AG04450 (cell line): ENCODE measurements at regions of chr1 and their contacts with region 1.

Region 1: DNA sequence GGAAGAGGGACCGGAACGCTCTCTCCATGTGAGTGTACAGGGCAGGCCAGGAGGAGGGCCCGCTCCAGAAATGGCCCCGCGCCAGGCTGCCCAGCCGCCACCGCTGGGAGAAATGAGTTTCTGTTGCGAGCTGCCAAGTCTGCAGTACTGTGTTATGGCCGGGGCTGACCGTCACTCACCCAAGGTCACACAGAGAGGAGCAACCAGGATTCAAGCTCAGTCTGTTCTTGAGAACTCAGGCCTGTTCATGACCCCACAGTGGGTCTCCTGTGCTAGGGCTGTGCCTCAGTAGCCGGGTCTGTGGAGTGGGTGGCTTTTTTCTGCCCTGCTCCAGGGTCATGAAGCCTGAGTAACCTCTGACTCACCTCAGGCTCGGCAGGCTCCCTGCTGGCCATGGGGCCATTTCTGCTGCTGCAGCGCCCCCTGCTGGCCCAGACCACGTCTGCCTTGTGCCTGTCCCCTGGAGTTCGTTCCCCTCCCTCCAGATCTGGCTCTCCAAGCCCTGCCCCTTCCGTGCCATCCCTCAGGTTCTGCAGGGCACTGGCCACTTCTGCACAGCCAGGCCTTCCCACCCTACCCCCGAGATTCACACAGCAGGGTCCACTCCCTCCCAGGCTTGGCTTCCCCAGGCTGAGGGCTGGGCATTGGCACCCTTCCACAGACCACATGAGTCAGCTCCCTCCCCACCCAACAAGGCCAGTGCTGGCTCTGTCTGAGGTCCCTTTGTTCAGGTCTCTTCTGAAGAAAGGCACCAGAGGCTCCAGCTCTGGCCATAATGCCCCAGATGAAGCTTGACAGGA is 51.8 kb downstream of the EDN2 start:
- DNase-seq: peak; percentile 34
- H3K4me3 ChIP-seq: no peak overlapping the region
- H3K27ac ChIP-seq: no peak overlapping the region
- H3K27me3 ChIP-seq: peaks cover 10% of the 10 kb centered on the region
- CTCF ChIP-seq: peak; percentile 88

Region 2: GRCh38 chr1:41282679-41283317 is 149.9 kb before region 1 on chr1:
- CTCF ChIA-PET with region 1: interaction called, 33 read pairs
- POLR2A ChIA-PET with region 1: no interaction called
- DNase-seq: no peak
- H3K4me3 ChIP-seq: no peak overlapping the region
- H3K27ac ChIP-seq: no peak overlapping the region
- H3K27me3 ChIP-seq: peaks cover 51% of the 10 kb centered on the region
- CTCF ChIP-seq: peak; percentile 94

Region 3: DNA sequence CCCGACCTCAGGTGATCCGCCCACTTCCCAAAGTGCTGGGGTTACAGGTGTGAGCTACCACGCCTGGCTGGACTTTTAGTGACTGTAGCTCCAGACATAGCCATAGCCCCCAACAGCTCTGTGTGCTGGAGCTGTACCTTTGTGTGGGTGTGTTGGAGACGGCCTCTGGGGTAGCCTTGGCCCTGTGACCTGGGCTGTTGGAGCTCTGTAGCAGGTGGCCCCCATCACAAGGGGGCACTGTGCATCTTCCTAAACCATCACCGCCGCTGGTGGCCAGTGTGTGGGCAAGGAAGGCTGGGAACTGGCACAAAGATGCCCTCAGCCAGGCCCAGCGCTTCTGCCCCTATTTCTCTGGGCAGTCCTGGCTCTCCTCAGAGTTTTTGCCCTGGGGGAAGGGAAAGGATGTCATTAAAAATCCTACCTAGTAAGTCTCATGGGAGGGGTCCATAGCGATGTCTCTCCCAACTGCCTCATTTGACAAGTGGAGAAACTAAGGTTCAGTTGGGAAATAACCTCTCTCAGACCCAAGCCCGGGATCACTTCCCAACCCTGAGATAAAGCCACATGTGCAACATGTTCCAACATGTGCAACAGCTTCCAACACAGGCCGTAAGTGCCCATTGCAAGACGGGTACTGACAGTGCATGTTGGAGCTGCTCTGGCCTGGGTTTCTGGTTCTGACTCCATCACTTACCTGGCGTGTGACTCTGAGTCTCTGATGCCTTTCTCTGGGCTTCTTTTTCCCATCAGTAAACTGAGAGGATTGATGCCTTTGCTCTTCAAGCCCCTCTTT is 109.7 kb before region 1 on chr1:
- CTCF ChIA-PET with region 1: interaction called, 18 read pairs
- POLR2A ChIA-PET with region 1: no interaction called
- DNase-seq: no peak
- H3K4me3 ChIP-seq: no peak overlapping the region
- H3K27ac ChIP-seq: no peak overlapping the region
- H3K27me3 ChIP-seq: peaks cover 14% of the 10 kb centered on the region
- CTCF ChIP-seq: peak; percentile 43

Region 4: GRCh38 chr1:41444246-41444645 is 11.6 kb after region 1 on chr1:
- CTCF ChIA-PET with region 1: interaction called, 22 read pairs
- POLR2A ChIA-PET with region 1: interaction called, 3 read pairs
- DNase-seq: no peak
- H3K4me3 ChIP-seq: no peak overlapping the region
- H3K27ac ChIP-seq: no peak overlapping the region
- H3K27me3 ChIP-seq: peaks cover 18% of the 10 kb centered on the region
- CTCF ChIP-seq: peak; percentile 12; the same call in 1 of the 2 replicates